PC-9 (cell line): ENCODE measurements at regions of chr22 and their contacts with region 1.

Region 1: DNA sequence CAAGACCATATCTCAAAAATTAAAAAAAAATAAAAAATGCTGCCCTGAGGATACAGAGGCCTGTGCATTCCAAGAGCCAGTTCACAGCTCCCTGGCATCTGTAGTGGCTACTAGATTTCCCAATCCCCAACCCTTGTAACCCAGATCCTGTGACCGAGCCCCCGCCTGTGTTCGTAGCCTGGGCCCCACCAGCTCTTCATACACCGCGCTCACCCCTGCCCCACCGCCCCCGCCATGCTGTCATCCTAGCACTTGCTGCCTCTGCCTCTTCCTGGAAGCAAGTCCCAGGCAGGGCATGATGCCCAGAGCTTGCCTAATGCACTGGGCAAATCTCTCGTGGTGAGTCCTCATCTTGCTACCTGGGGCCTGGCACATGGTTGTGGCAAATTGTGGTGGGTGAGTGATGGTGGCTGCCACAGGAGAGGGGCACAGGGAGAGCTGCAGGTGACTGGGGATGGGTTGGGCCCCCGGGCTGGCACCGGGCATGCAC is 7.1 kb downstream of the MGAT3 start:
- DNase-seq: peak; percentile 49 to 77
- H3K4me3 ChIP-seq: no peak overlapping the region
- H3K27ac ChIP-seq: no peak overlapping the region
- H3K4me1 ChIP-seq: peaks cover 4% of the 10 kb centered on the region; the same call in 1 of the 2 replicates
- H3K27me3 ChIP-seq: peaks cover 6% of the 10 kb centered on the region; the same call in 1 of the 2 replicates
- CTCF ChIP-seq: no peak

Region 2: DNA sequence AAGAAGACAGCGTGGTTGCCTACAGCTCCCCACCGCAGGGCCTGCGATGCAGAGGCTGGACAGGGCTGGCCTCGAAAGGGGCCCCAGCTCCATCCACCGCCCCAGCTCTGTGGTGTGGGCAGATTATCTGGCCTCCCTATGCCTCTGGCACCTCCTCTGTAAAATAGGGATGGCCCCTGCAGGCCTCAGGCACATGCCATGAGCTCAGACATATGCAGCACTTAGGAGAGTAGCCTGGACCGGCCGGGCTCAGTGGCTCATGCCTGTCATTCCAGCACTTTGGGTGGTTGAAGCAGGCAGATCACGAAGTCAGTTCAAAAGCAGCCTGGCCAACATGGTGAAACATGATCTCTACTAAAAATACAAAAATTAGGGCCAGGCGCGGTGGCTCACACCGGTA is 435.7 kb before region 1 on chr22:
- CTCF ChIA-PET with region 1: no interaction called
- POLR2A ChIA-PET with region 1: no interaction called
- intact Hi-C with region 1: no loop called
- DNase-seq: no peak
- H3K4me3 ChIP-seq: no peak overlapping the region
- H3K27ac ChIP-seq: no peak overlapping the region
- H3K4me1 ChIP-seq: peaks cover 7% of the 10 kb centered on the region; the same call in 1 of the 2 replicates
- H3K27me3 ChIP-seq: no peaks in the 10 kb centered on the region
- CTCF ChIP-seq: no peak

Region 3: GRCh38 chr22:39414886-39415285 is 49.1 kb before region 1 on chr22:
- CTCF ChIA-PET with region 1: no interaction called
- POLR2A ChIA-PET with region 1: no interaction called
- intact Hi-C with region 1: no loop called
- DNase-seq: no peak
- H3K4me3 ChIP-seq: no peak overlapping the region
- H3K27ac ChIP-seq: no peak overlapping the region
- H3K4me1 ChIP-seq: no peaks in the 10 kb centered on the region
- H3K27me3 ChIP-seq: no peaks in the 10 kb centered on the region
- CTCF ChIP-seq: no peak

Region 4: DNA sequence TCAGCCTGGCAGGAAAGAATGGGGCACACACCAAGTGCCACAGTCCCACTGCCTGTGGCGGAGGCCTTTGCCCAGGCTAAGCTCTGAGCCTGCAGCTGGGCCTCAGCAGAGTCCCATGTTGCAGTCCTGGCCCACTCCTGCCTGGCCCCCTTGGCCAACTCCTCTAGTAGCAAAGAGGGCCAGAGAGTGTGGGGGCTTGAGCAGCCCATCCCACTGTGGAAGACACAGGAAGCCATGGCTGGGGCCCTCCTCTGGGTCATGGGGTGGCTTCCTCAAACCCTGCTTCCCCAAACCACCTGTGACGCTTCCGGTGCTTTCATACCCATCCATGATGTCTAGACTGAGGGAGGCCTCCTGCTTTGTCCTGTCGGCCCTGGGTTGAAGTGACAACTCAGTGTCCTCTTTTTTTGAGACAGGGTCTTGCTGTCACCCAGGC is 62.8 kb after region 1 on chr22:
- CTCF ChIA-PET with region 1: interaction called, 16 read pairs
- POLR2A ChIA-PET with region 1: interaction called, 15 read pairs
- intact Hi-C with region 1: no loop called
- DNase-seq: peak in 1 of 2 experiments; percentile 35
- H3K4me3 ChIP-seq: no peak overlapping the region
- H3K27ac ChIP-seq: 0 out of 2 replicates have a peak overlapping the region, but pooled peaks have one; percentile 19
- H3K4me1 ChIP-seq: peaks cover 52% of the 10 kb centered on the region
- H3K27me3 ChIP-seq: no peaks in the 10 kb centered on the region
- CTCF ChIP-seq: no peak